ENCODE measurements at regions of chr2 and their contacts with region 1.

Region 1: GRCh38 chr2:160109936-160110673 is 47.7 kb upstream of the PLA2R1 start:
- DNase-seq: peak; percentile 82
- H3K4me3 Mint-ChIP-seq: no peak overlapping the region
- H3K27ac Mint-ChIP-seq: peak overlapping the region; percentile 82
- H3K4me1 Mint-ChIP-seq: peaks cover 17% of the 10 kb centered on the region
- H3K27me3 Mint-ChIP-seq: no peaks in the 10 kb centered on the region
- CTCF ChIP-seq: peak; percentile 80

Region 2: DNA sequence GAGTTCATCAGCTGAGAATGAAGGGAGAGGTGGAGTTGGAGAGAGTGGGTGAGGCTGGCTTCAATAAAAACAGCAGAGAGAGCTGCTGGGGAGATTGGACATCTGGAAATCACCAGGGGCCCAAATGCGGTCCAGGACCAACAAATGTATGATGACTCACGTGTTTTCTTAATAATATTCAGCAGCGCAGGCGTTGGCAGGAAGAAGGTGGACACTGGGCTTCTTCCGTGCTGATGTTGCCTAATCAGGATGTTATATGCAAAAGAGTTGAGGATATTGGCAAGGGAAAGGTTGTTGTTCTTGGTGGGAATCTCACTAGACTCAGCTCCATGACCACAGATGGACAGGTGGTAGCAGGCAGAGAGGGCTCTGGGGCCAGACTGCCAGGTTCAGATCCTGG is 34.9 kb before region 1 on chr2:
- CTCF ChIA-PET with region 1: interaction called, 13 read pairs
- POLR2A ChIA-PET with region 1: interaction called, 7 read pairs
- intact Hi-C with region 1: no loop called
- DNase-seq: peak; percentile 98
- H3K4me3 Mint-ChIP-seq: peak overlapping the region; percentile 22
- H3K27ac Mint-ChIP-seq: no peak overlapping the region
- H3K4me1 Mint-ChIP-seq: no peaks in the 10 kb centered on the region
- H3K27me3 Mint-ChIP-seq: no peaks in the 10 kb centered on the region
- CTCF ChIP-seq: no peak

Region 3: DNA sequence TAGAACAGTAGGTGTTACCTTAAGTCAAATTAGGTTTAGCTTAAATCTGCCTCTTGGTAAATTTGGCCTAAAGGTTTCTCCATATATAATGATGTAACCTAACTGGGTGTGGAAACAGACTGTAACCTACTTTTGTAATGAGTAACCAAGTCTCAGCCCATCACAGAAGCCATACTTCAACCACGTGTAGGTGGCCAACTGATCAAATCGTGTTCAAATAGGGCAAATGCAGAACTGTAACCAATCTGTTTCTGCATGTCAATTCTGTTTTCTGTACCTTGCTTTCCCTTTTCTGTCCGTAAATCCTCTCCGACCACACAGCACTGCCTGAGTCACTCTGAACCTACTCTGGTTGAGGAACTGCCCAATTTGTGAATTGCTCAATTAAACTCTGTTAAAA is 13.7 kb before region 1 on chr2:
- CTCF ChIA-PET with region 1: interaction called, 22 read pairs
- POLR2A ChIA-PET with region 1: interaction called, 19 read pairs
- intact Hi-C with region 1: no loop called
- DNase-seq: peak; percentile 47
- H3K4me3 Mint-ChIP-seq: no peak overlapping the region
- H3K27ac Mint-ChIP-seq: peak overlapping the region; percentile 76
- H3K4me1 Mint-ChIP-seq: peaks cover 12% of the 10 kb centered on the region
- H3K27me3 Mint-ChIP-seq: no peaks in the 10 kb centered on the region
- CTCF ChIP-seq: no peak

Region 4: DNA sequence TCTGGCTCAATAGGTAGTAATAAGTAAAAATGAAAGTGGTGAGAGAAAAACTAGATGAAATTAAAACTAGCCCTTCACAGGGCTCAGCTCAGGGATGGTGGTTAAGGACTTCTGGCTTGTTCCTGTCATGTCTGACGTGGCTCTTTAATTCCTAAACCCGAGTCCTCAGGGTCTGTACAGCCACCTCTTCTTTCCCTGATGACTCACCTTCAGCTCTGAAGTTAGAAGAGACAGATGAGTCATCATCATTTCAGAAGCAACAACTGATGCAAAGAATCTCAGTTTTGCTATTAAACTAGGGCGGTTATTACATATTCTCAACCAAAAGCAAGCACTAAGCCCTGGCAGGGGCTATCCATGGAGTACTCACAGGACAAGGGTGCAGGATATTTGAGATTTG is 114.0 kb after region 1 on chr2:
- CTCF ChIA-PET with region 1: interaction called, 21 read pairs
- POLR2A ChIA-PET with region 1: interaction called, 9 read pairs
- intact Hi-C with region 1: no loop called
- DNase-seq: peak; percentile 97
- H3K4me3 Mint-ChIP-seq: peak overlapping the region; percentile 48
- H3K27ac Mint-ChIP-seq: peak overlapping the region; percentile 99
- H3K4me1 Mint-ChIP-seq: peaks cover 92% of the 10 kb centered on the region
- H3K27me3 Mint-ChIP-seq: no peaks in the 10 kb centered on the region
- CTCF ChIP-seq: no peak

Region 5: DNA sequence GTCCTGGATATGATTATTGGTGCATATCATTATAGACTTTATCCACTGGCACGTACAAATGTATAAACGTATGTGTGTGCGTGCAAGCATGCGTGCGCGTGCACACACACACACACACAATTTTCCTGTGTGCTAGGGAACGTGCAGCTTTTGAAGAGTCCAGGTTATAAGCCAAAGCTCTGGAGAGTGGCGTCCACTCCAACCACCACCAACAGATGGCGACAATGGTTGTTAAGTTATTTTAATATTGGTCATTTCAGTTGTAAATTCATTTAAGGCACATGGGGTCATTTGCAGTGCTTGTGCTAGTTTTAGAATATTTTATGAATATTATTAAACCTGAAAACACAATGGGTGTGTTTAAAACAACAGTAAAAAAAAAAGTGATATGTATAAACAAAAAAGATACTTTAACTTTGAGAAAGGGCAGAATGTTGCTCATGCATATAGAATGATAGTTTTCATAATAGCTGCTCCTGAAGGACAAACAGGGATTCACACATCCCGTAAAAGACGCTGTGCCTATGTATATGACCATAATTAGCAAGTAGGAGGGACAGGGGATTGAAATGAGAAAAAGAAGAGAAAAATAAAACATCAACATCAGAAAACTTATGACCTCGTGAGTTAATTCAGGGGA is 214.2 kb after region 1 on chr2:
- CTCF ChIA-PET with region 1: interaction called, 16 read pairs
- POLR2A ChIA-PET with region 1: interaction called, 3 read pairs
- intact Hi-C with region 1: loop called (anchors 5 kb)
- DNase-seq: peak; percentile 66
- H3K4me3 Mint-ChIP-seq: no peak overlapping the region
- H3K27ac Mint-ChIP-seq: peak overlapping the region; percentile 36
- H3K4me1 Mint-ChIP-seq: peaks cover 30% of the 10 kb centered on the region
- H3K27me3 Mint-ChIP-seq: no peaks in the 10 kb centered on the region
- CTCF ChIP-seq: peak; percentile 71

Region 6: GRCh38 chr2:160918906-160919503 is 808.9 kb after region 1 on chr2:
- CTCF ChIA-PET with region 1: interaction called, 3 read pairs
- POLR2A ChIA-PET with region 1: no interaction called
- intact Hi-C with region 1: loop called (anchors 1 kb)
- DNase-seq: peak; percentile 79
- H3K4me3 Mint-ChIP-seq: no peak overlapping the region
- H3K27ac Mint-ChIP-seq: no peak overlapping the region
- H3K4me1 Mint-ChIP-seq: no peaks in the 10 kb centered on the region
- H3K27me3 Mint-ChIP-seq: no peaks in the 10 kb centered on the region
- CTCF ChIP-seq: peak; percentile 71

Measured in MCF 10A (cell line).